CD4-positive, alpha-beta T cell (primary cell): ENCODE measurements at regions of chr1 and their contacts with region 1.

Region 1: GRCh38 chr1:160251687-160252526 is 10.4 kb downstream of the DCAF8 start:
- DNase-seq: peak; percentile 25 to 82 (median 49)
- ATAC-seq: peak; percentile 100
- H3K4me3 ChIP-seq: no peak overlapping the region
- H3K4me3 Mint-ChIP-seq: no peak overlapping the region
- H3K27ac ChIP-seq: no peak overlapping the region
- H3K27ac Mint-ChIP-seq: peak overlapping the region; percentile 57
- H3K4me1 ChIP-seq: no peaks in the 10 kb centered on the region
- H3K4me1 Mint-ChIP-seq: peaks cover 34% of the 10 kb centered on the region
- H3K27me3 ChIP-seq: no peaks in the 10 kb centered on the region
- H3K27me3 Mint-ChIP-seq: no peaks in the 10 kb centered on the region
- CTCF ChIP-seq: peak; percentile 76

Region 2: GRCh38 chr1:159719990-159720389 is 531.9 kb before region 1 on chr1:
- CTCF ChIA-PET with region 1: no interaction called
- POLR2A ChIA-PET with region 1: no interaction called
- intact Hi-C with region 1: no loop called
- DNase-seq: no peak
- ATAC-seq: no peak
- H3K4me3 ChIP-seq: no peak overlapping the region
- H3K4me3 Mint-ChIP-seq: no peak overlapping the region
- H3K27ac ChIP-seq: no peak overlapping the region
- H3K27ac Mint-ChIP-seq: no peak overlapping the region
- H3K4me1 ChIP-seq: no peaks in the 10 kb centered on the region
- H3K4me1 Mint-ChIP-seq: no peaks in the 10 kb centered on the region
- H3K27me3 ChIP-seq: peaks cover 0 to 12% of the 10 kb centered on the region in 2 experiments
- H3K27me3 Mint-ChIP-seq: peaks cover 33% of the 10 kb centered on the region
- CTCF ChIP-seq: no peak

Region 3: DNA sequence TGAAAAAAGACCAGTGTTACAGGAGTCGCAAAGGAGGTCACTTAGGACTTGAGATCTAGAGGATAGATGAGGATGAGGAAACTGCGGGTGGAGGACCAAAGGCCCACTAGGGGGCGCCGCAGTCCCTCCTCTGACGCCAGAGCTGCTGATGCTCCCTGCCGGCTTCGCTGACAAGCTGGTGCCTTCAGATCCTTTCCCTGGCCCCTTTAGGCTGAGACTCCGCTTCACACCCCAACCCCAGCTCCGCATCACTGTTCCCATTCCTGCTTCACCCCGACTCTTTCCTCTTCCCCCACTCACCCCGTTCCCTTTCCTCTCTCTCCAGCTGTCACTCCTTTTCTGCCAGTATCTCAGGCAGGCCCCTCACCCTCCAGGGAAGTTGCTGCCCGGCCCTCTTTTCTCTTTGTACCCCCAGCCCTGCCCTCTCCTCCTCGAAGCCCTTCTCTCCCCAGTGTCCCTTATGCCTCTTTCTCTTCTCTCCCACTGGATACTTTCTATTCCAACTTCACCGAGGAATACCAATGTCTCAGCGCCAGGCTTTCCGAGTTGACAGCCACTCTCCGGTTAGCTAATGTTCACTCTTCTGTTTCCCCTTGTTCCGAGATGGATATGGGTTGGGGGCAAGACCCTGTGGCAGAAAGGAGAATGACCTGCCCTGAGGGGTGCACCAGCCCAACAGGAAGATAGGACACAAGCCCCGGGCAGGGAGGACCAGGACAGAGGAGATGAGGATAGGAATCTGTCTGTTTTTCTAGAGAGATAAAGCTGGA is 166.0 kb before region 1 on chr1:
- CTCF ChIA-PET with region 1: interaction called, 4 read pairs
- POLR2A ChIA-PET with region 1: no interaction called
- intact Hi-C with region 1: loop called in 1 of 2 experiments (anchors 5 kb)
- DNase-seq: peak; percentile 66 to 87 (median 73)
- ATAC-seq: peak; percentile 71
- H3K4me3 ChIP-seq: no peak overlapping the region
- H3K4me3 Mint-ChIP-seq: peak overlapping the region; percentile 58
- H3K27ac ChIP-seq: no peak overlapping the region
- H3K27ac Mint-ChIP-seq: peak overlapping the region; percentile 47
- H3K4me1 ChIP-seq: peaks cover 15% of the 10 kb centered on the region
- H3K4me1 Mint-ChIP-seq: peaks cover 22% of the 10 kb centered on the region
- H3K27me3 ChIP-seq: peaks cover 22 to 24% of the 10 kb centered on the region in 2 experiments
- H3K27me3 Mint-ChIP-seq: peaks cover 24% of the 10 kb centered on the region
- CTCF ChIP-seq: peak; percentile 82

Region 4: DNA sequence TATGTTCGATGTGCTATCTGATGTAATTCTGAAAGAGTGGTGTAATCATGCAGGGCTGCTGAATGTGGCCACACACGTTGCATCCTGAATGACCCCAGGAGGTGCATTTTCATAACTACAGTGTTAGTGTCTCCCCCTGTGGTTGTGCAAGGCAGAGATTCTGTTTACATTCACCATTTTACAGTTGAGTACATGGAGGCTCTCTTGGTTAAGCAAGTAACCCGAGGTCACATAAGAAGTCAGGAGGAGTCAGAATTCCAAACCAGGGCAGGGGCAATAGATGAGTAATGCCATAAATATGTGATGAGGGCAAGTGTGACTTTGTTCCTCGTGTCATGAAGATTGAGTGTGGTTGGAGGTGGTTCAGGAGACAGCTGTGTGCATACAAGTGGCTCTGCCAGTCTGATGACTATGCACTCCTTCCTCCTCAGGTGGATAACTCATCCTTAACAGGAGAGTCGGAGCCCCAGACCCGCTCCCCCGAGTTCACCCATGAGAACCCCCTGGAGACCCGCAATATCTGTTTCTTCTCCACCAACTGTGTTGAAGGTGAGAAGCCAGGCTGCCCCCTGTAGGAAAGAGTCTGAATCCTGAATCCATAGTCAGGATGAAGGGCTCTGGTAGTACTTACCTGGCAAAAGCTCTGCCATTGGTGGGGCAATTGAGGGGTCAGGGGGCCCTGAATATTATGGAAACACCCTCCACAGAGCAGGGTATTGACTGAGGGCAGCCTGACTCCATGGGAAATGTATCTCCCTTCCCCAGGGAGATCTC is 127.0 kb before region 1 on chr1:
- CTCF ChIA-PET with region 1: no interaction called
- POLR2A ChIA-PET with region 1: no interaction called
- intact Hi-C with region 1: no loop called
- DNase-seq: no peak
- ATAC-seq: no peak
- H3K4me3 ChIP-seq: no peak overlapping the region
- H3K4me3 Mint-ChIP-seq: no peak overlapping the region
- H3K27ac ChIP-seq: no peak overlapping the region
- H3K27ac Mint-ChIP-seq: no peak overlapping the region
- H3K4me1 ChIP-seq: no peaks in the 10 kb centered on the region
- H3K4me1 Mint-ChIP-seq: no peaks in the 10 kb centered on the region
- H3K27me3 ChIP-seq: peaks cover 0 to under 1% of the 10 kb centered on the region in 2 experiments
- H3K27me3 Mint-ChIP-seq: peaks cover 5% of the 10 kb centered on the region
- CTCF ChIP-seq: no peak

Region 5: GRCh38 chr1:160205242-160206035 is 46.5 kb before region 1 on chr1 and contains the start of gene PEA15:
- CTCF ChIA-PET with region 1: interaction called, 7 read pairs
- POLR2A ChIA-PET with region 1: no interaction called
- intact Hi-C with region 1: loop called in 1 of 2 experiments (anchors 5 kb)
- DNase-seq: peak; percentile 30 to 85 (median 66)
- ATAC-seq: peak; percentile 80
- H3K4me3 ChIP-seq: peak within 1 kb of the TSS; percentile 97
- H3K4me3 Mint-ChIP-seq: peak within 1 kb of the TSS; percentile 93
- H3K27ac ChIP-seq: peak within 1 kb of the TSS; percentile 33 to 71
- H3K27ac Mint-ChIP-seq: peak within 1 kb of the TSS; percentile 76
- H3K4me1 ChIP-seq: peaks cover 42% of the 10 kb centered on the region
- H3K4me1 Mint-ChIP-seq: peaks cover 42% of the 10 kb centered on the region
- H3K27me3 ChIP-seq: no peaks in the 10 kb centered on the region
- H3K27me3 Mint-ChIP-seq: no peaks in the 10 kb centered on the region
- CTCF ChIP-seq: no peak
- total RNA-seq, gene PEA15: 9.4 to 10.3 TPM

Region 6: GRCh38 chr1:160261893-160262794 is 10.2 kb after region 1 on chr1 and contains the start of gene DCAF8:
- CTCF ChIA-PET with region 1: interaction called, 23 read pairs
- POLR2A ChIA-PET with region 1: interaction called, 39 read pairs
- intact Hi-C with region 1: no loop called
- DNase-seq: peak; percentile 96 to 99 (median 98)
- ATAC-seq: peak; percentile 86
- H3K4me3 ChIP-seq: peak within 1 kb of the TSS; percentile 83
- H3K4me3 Mint-ChIP-seq: peak within 1 kb of the TSS; percentile 96
- H3K27ac ChIP-seq: peak within 1 kb of the TSS; percentile 98 to 99
- H3K27ac Mint-ChIP-seq: peak within 1 kb of the TSS; percentile 97
- H3K4me1 ChIP-seq: peaks cover 33% of the 10 kb centered on the region
- H3K4me1 Mint-ChIP-seq: peaks cover 55% of the 10 kb centered on the region
- H3K27me3 ChIP-seq: no peaks in the 10 kb centered on the region
- H3K27me3 Mint-ChIP-seq: no peaks in the 10 kb centered on the region
- CTCF ChIP-seq: no peak
- total RNA-seq, gene DCAF8: 151 to 154 TPM

Region 7: GRCh38 chr1:160291248-160292220 is 39.6 kb after region 1 on chr1:
- CTCF ChIA-PET with region 1: interaction called, 11 read pairs
- POLR2A ChIA-PET with region 1: interaction called, 3 read pairs
- intact Hi-C with region 1: loop called in 1 of 2 experiments (anchors 5 kb)
- DNase-seq: peak; percentile 48 to 88 (median 58)
- ATAC-seq: peak; percentile 99
- H3K4me3 ChIP-seq: no peak overlapping the region
- H3K4me3 Mint-ChIP-seq: peak overlapping the region; percentile 5
- H3K27ac ChIP-seq: no peak overlapping the region
- H3K27ac Mint-ChIP-seq: peak overlapping the region; percentile 16
- H3K4me1 ChIP-seq: peaks cover 6% of the 10 kb centered on the region
- H3K4me1 Mint-ChIP-seq: peaks cover 7% of the 10 kb centered on the region
- H3K27me3 ChIP-seq: no peaks in the 10 kb centered on the region
- H3K27me3 Mint-ChIP-seq: no peaks in the 10 kb centered on the region
- CTCF ChIP-seq: peak; percentile 78

Region 8: GRCh38 chr1:160711602-160712311 is 459.9 kb after region 1 on chr1 and contains the start of gene CD48:
- CTCF ChIA-PET with region 1: no interaction called
- POLR2A ChIA-PET with region 1: no interaction called
- intact Hi-C with region 1: no loop called
- DNase-seq: peak in 11 of 14 experiments; percentile 26 to 88 (median 50)
- ATAC-seq: peak; percentile 52
- H3K4me3 ChIP-seq: peak within 1 kb of the TSS; percentile 73
- H3K4me3 Mint-ChIP-seq: no peak within 1 kb of the TSS
- H3K27ac ChIP-seq: peak within 1 kb of the TSS; percentile 86 to 93
- H3K27ac Mint-ChIP-seq: no peak within 1 kb of the TSS
- H3K4me1 ChIP-seq: peaks cover 52% of the 10 kb centered on the region
- H3K4me1 Mint-ChIP-seq: peaks cover 50% of the 10 kb centered on the region
- H3K27me3 ChIP-seq: no peaks in the 10 kb centered on the region
- H3K27me3 Mint-ChIP-seq: no peaks in the 10 kb centered on the region
- CTCF ChIP-seq: no peak
- total RNA-seq, gene CD48: 387 to 395 TPM